ENCODE measurements at regions of chr3 and their contacts with region 1.

Region 1: GRCh38 chr3:100047455-100048141 is 66.7 kb downstream of the FILIP1L start:
- DNase-seq: no peak
- ATAC-seq: peak; percentile 13 to 24

Region 2: DNA sequence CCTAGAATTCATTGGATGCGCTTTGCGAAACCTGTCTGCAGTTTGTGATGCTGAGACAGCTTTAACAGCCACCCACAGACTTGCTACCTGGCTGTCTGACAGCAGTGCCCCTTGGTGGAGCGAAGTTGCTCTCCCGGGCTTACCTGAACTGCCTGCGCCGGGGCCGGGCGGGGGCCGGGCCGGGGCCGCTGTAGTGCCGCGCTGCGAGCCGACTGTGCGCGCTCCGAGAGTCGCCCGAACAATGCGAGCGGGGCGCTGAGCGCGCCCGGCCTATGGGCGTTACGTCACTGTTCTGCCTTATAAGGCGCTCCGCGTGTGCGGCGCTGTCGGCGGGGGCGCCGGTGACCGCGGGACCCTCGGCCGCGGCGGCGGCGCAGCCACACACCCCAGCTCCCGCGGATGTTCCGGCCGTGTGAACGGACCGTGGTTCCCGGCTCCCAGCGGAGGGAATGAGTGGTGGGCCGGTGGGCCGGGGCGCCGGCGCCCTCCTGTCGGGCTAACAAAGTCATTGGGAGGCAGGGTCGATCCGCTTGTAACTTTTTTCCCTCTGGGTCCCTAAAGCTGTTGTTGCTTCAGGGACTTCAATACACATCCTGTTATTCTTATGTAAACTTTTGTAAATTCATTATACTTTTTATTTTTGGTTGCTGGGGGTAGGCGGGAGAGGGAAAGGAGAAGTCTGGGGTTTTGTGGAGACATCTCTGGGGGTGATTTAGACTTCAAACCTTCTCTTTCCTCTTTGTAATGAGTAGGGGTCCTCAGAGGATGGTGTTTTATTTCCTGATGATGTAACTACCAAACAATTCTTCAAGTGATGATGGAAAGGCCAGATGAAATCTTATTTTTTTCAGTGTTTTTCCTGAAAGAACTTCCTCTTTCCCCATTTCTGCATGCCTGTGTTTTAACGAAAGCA is 171.4 kb before region 1 on chr3:
- intact Hi-C with region 1: loop called (anchors 10 kb)
- DNase-seq: peak; percentile 87
- ATAC-seq: peak; percentile 95 to 97

Region 3: GRCh38 chr3:99929745-99930139 is 117.9 kb before region 1 on chr3:
- intact Hi-C with region 1: loop called in 1 of 2 experiments (anchors 10 kb)
- DNase-seq: peak; percentile 52
- ATAC-seq: peak; percentile 51 to 84

Region 4: DNA sequence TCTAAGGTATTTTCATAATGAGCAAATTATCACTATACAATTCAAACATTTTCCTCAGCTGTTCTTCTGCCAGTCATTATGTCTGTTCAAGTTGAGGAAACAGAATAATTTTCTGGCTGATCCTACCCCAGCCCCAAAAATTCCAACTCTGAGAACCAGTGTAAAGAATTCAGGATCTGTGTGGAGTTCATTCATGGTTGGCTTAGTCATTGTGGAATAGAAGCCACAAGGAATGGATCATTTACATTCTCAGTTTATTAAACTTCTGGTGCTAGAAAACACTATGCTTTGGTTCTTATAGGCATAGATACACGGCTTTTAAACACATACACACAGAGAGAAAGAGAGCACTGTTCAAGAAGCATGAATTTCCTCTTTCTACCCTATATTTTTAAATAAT is 95.3 kb before region 1 on chr3:
- intact Hi-C with region 1: loop called in 1 of 2 experiments (anchors 10 kb)
- DNase-seq: no peak
- ATAC-seq: no peak

Measured in left cardiac atrium (tissue), 4 donors.